PC-9 (cell line): ENCODE measurements at regions of chr20 and their contacts with region 1.

Region 1: GRCh38 chr20:33647603-33648395 is 14.3 kb upstream of the C20orf144 start:
- DNase-seq: no peak
- H3K4me3 ChIP-seq: no peak overlapping the region
- H3K27ac ChIP-seq: no peak overlapping the region
- H3K4me1 ChIP-seq: peaks cover 22% of the 10 kb centered on the region
- H3K27me3 ChIP-seq: no peaks in the 10 kb centered on the region
- CTCF ChIP-seq: no peak

Region 2: DNA sequence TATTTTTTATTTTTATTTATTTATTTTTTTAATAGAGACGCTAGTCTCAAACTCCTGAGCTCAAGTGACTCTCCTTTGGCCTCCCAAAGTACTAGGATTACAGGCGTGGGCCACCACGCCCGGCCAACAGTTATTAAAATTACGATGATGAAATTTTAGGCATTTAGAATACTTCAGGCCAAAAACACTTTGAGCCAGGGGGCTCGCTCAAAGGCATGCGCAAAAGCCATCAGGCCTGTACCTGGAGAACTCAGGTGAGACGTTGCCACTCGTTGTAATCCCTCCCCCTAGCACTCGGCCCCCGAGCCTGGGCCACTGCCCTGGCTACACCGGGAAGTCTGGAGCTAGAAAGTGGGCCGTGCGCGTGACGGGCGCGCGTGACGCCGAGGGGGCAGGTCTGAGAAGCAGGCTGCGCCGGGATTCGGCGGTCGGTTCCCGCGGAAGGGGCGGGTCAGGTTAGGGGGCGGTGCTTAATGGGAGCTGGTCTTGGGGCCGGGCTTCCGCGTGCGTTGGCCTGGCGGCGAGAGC is 158.2 kb before region 1 on chr20:
- CTCF ChIA-PET with region 1: no interaction called
- POLR2A ChIA-PET with region 1: no interaction called
- intact Hi-C with region 1: no loop called
- DNase-seq: peak; percentile 91 to 100
- H3K4me3 ChIP-seq: peak overlapping the region; percentile 55; the same call in 1 of the 2 replicates
- H3K27ac ChIP-seq: peak overlapping the region; percentile 90
- H3K4me1 ChIP-seq: peaks cover 18% of the 10 kb centered on the region
- H3K27me3 ChIP-seq: no peaks in the 10 kb centered on the region
- CTCF ChIP-seq: no peak

Region 3: GRCh38 chr20:33503564-33503963 is 144.2 kb before region 1 on chr20:
- CTCF ChIA-PET with region 1: no interaction called
- POLR2A ChIA-PET with region 1: interaction called, 11 read pairs
- intact Hi-C with region 1: no loop called
- DNase-seq: no peak
- H3K4me3 ChIP-seq: no peak overlapping the region
- H3K27ac ChIP-seq: no peak overlapping the region
- H3K4me1 ChIP-seq: no peaks in the 10 kb centered on the region
- H3K27me3 ChIP-seq: no peaks in the 10 kb centered on the region
- CTCF ChIP-seq: no peak

Region 4: DNA sequence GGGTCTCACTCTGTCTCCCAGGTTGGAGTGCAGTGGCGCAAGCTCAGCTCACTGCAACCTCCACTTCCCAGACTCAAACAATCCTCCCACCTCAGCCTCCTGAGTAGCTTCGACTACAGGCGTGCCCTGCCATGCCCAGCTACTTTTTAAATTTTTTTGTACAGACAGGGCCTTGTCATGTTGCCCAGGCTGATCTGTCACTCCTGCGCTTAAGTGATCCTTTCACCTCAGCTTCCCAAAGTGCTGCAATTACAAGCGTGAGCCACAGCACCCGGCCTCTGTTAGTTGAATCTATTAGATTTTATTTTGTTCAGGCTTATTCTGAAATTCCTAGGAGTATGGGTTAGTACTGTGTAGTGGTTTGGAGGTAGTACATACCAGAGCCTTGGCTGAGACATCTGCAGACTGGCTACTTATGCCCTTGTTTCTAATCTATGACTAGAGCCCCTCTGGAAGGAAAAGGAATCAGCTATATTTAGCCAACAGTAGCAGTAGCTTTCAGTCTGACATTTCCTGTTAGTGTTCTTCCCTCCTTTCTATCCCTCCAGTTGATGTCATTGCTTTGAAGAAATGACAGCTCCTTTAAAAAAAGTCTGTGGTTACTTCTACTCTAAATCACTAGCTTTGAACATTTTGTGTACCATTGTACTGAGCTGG is 789.7 kb after region 1 on chr20:
- CTCF ChIA-PET with region 1: no interaction called
- POLR2A ChIA-PET with region 1: no interaction called
- intact Hi-C with region 1: no loop called
- DNase-seq: no peak
- H3K4me3 ChIP-seq: no peak overlapping the region
- H3K27ac ChIP-seq: peak overlapping the region; percentile 4
- H3K4me1 ChIP-seq: no peaks in the 10 kb centered on the region
- H3K27me3 ChIP-seq: no peaks in the 10 kb centered on the region
- CTCF ChIP-seq: no peak